Natural killer cell (primary cell): ENCODE measurements at regions of chr2 and their contacts with region 1.

Region 1: DNA sequence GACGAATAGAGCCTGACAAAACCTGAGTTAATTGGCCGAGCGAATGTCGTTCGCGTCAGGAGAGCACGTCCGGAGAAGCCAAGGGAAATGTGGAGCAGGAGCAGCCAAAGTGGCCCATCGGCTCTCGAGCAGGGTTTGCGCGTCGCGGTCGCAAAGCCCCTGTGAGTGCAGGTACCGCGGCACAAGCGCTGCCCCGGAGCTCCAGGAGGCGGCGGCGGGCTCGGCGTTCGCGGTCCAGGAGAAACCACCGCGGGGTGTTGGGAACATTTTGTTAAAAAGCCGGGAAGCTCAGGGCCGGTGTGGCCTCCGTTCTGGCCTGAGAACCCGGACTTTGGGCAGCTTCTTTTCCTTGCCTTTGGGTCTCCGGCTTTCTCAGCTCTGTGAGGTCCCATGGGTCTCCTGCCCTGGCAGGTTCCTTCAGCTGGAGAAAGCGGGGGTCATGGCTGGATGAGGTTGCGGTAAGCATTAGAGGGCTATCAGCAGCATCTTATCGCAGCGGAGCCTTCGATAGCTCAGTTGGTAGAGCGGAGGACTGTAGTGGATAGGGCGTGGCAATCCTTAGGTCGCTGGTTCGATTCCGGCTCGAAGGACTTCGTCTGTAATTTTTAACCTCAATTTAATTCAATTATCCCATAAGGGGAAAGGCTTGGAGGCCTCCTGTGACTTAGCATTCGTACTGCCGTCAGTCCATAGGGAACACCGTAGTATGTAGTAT is 1.0 kb upstream of the AGBL5 start:
- DNase-seq: peak; percentile 94 to 98
- ATAC-seq: peak; percentile 59 to 80 (median 60)
- H3K4me3 ChIP-seq: peak overlapping the region; percentile 66
- H3K4me3 Mint-ChIP-seq: peak overlapping the region; percentile 99
- H3K27ac ChIP-seq: peak overlapping the region; percentile 82
- H3K27ac Mint-ChIP-seq: peak overlapping the region; percentile 99 to 100
- H3K4me1 ChIP-seq: peaks cover 16% of the 10 kb centered on the region
- H3K4me1 Mint-ChIP-seq: peaks cover 29 to 37% of the 10 kb centered on the region in 2 donors
- H3K27me3 ChIP-seq: no peaks in the 10 kb centered on the region
- H3K27me3 Mint-ChIP-seq: peaks cover 6 to 12% of the 10 kb centered on the region in 2 donors
- CTCF ChIP-seq: no peak

Region 2: GRCh38 chr2:26942543-26943295 is 107.7 kb before region 1 on chr2:
- intact Hi-C with region 1: no loop called
- DNase-seq: peak; percentile 46 to 77
- ATAC-seq: peak in 2 of 3 donors; percentile 36 to 64
- H3K4me3 ChIP-seq: no peak overlapping the region
- H3K4me3 Mint-ChIP-seq: no peak overlapping the region
- H3K27ac ChIP-seq: no peak overlapping the region
- H3K27ac Mint-ChIP-seq: no peak overlapping the region
- H3K4me1 ChIP-seq: no peaks in the 10 kb centered on the region
- H3K4me1 Mint-ChIP-seq: peaks cover 0 to 7% of the 10 kb centered on the region in 2 donors
- H3K27me3 ChIP-seq: no peaks in the 10 kb centered on the region
- H3K27me3 Mint-ChIP-seq: peaks cover 10 to 14% of the 10 kb centered on the region in 2 donors
- CTCF ChIP-seq: peak; percentile 73

Region 3: DNA sequence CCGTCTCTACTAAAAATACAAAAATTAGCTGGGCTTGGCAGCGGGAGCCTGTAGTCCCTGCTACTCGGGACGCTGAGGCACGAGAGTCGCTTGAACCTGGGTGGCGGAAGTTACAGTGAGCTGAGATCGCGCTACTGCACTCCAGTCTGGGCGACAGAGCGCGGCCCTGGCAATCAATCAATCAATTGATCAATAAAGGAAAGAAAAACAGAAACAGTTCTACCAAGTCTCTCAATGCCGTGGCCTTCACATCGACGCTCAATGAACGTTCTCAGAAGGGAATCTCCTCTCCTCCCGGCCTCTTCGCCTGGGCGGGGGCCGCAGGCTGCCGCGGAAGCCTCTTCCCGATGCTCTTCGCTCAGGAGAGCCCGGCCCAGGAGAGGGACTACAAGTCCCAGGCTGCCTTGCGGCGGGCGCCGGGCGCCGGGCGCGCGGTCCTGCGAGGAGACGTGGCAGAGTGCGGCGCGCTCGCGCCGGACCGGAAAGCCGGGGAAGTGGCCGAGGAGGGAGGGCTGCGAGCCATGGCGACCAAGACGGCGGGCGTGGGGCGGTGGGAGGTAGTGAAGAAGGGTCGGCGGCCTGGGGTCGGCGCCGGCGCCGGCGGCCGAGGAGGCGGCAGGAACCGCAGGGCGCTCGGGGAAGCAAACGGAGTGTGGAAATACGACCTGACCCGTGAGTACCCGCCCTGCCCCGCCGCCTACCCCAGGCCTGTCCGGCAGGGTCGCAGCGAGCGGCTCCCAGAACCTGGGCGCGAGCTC is 17.8 kb before region 1 on chr2 and contains the start of gene TMEM214:
- intact Hi-C with region 1: loop called (anchors 2 kb)
- DNase-seq: peak; percentile 77 to 83
- ATAC-seq: peak; percentile 95 to 98 (median 96)
- H3K4me3 ChIP-seq: peak within 1 kb of the TSS; percentile 90
- H3K4me3 Mint-ChIP-seq: peak within 1 kb of the TSS; percentile 94
- H3K27ac ChIP-seq: peak within 1 kb of the TSS; percentile 79
- H3K27ac Mint-ChIP-seq: peak within 1 kb of the TSS; percentile 86 to 95
- H3K4me1 ChIP-seq: peaks cover 18% of the 10 kb centered on the region
- H3K4me1 Mint-ChIP-seq: peaks cover 13 to 54% of the 10 kb centered on the region in 2 donors
- H3K27me3 ChIP-seq: no peaks in the 10 kb centered on the region
- H3K27me3 Mint-ChIP-seq: no peaks in the 10 kb centered on the region
- CTCF ChIP-seq: no peak
- total RNA-seq, gene TMEM214: 64.9 to 81.1 (median 79.2) TPM

Region 4: DNA sequence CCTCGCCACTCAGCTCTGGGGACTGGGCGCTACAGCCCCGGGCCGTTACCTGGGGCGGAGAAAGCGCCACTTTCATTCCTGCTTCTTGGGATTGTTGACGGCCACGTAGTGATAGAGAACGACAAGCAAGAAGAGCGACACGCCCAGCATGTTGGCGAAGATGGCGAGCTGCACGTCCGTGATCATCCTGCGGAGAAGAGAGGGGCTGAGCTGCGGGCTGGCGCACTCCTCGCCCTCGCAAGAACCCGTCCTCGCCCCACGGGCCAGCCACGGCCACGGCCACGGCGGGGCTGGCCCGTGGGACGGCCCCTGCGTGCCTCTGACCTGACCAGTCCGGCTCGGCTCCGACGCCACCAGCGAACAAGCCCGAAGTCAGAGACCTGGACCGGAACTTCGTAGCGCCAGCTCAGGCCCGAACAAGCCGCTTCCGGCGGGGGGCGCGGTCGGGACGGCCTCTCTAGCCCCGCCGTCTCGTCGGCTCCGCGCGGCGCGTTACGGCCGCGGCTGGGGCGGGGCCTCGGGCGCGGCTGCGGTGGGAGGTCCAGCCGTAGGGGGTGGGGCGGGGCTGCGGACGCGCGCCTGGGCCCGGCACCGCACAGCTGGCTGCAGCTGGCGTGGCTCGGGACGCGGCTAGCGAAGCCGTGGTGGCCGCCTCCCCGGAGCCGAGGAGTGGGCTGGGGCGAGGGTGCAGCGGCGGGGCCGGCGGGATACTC is 21.0 kb after region 1 on chr2 and contains the start of gene OST4:
- intact Hi-C with region 1: loop called (anchors 1 kb)
- DNase-seq: peak; percentile 88 to 94
- ATAC-seq: peak; percentile 90 to 97 (median 92)
- H3K4me3 ChIP-seq: peak within 1 kb of the TSS; percentile 92
- H3K4me3 Mint-ChIP-seq: peak within 1 kb of the TSS; percentile 97
- H3K27ac ChIP-seq: peak within 1 kb of the TSS; percentile 87
- H3K27ac Mint-ChIP-seq: peak within 1 kb of the TSS; percentile 90 to 93
- H3K4me1 ChIP-seq: peaks cover 49% of the 10 kb centered on the region
- H3K4me1 Mint-ChIP-seq: peaks cover 49 to 70% of the 10 kb centered on the region in 2 donors
- H3K27me3 ChIP-seq: no peaks in the 10 kb centered on the region
- H3K27me3 Mint-ChIP-seq: no peaks in the 10 kb centered on the region
- CTCF ChIP-seq: no peak
- total RNA-seq, gene OST4: 178 to 207 (median 192) TPM

Region 5: DNA sequence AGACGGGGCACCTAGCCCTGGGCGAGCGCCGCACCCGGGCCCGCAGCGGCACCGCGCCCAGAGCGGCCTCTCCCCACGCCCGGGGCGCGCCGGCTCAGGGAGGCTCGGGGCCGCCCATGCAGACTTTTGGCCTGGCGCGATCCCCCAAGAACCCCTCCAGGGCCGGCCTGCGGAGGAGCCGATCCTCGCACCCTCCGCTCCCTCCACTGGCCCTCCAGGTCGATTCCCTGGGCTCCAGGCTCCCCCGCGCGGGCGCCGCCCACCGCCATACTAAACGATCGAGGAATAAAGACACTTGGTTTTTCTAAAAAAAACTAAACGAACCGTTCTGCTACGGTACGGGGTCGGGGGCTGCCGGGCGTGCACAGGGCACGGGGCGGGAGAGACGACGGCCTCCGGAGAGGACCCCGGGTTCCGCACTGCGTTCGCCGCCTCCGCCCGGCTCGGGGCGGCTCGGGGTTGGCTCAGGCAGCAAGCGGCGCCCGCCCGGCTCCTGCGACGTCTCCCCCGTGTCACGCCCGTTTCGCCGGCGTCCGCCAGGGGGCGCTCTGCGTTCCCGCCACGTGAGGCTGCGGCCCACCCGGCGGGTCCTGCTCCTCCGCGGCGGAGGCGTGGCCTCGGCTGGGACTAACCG is 35.8 kb after region 1 on chr2:
- intact Hi-C with region 1: loop called (anchors 1 kb)
- DNase-seq: peak; percentile 99
- ATAC-seq: peak; percentile 93 to 98 (median 96)
- H3K4me3 ChIP-seq: peak overlapping the region; percentile 65
- H3K4me3 Mint-ChIP-seq: peak overlapping the region; percentile 89
- H3K27ac ChIP-seq: peak overlapping the region; percentile 82
- H3K27ac Mint-ChIP-seq: peak overlapping the region; percentile 60 to 87
- H3K4me1 ChIP-seq: peaks cover 34% of the 10 kb centered on the region
- H3K4me1 Mint-ChIP-seq: peaks cover 23 to 29% of the 10 kb centered on the region in 2 donors
- H3K27me3 ChIP-seq: no peaks in the 10 kb centered on the region
- H3K27me3 Mint-ChIP-seq: no peaks in the 10 kb centered on the region
- CTCF ChIP-seq: peak; percentile 86

Region 6: GRCh38 chr2:27133905-27134780 is 83.7 kb after region 1 on chr2 and contains the start of gene PREB:
- intact Hi-C with region 1: loop called (anchors 5 kb)
- DNase-seq: peak; percentile 98 to 99
- ATAC-seq: peak; percentile 96 to 98 (median 97)
- H3K4me3 ChIP-seq: peak within 1 kb of the TSS; percentile 70
- H3K4me3 Mint-ChIP-seq: peak within 1 kb of the TSS; percentile 97
- H3K27ac ChIP-seq: peak within 1 kb of the TSS; percentile 71
- H3K27ac Mint-ChIP-seq: peak within 1 kb of the TSS; percentile 94 to 97
- H3K4me1 ChIP-seq: peaks cover 24% of the 10 kb centered on the region
- H3K4me1 Mint-ChIP-seq: peaks cover 18 to 30% of the 10 kb centered on the region in 2 donors
- H3K27me3 ChIP-seq: no peaks in the 10 kb centered on the region
- H3K27me3 Mint-ChIP-seq: no peaks in the 10 kb centered on the region
- CTCF ChIP-seq: no peak
- total RNA-seq, gene PREB: 24.6 to 41.5 (median 31.2) TPM

Region 7: GRCh38 chr2:27262379-27263286 is 212.2 kb after region 1 on chr2 and contains the start of gene SLC30A3:
- intact Hi-C with region 1: no loop called
- DNase-seq: peak; percentile 30 to 81
- ATAC-seq: peak; percentile 60 to 77 (median 69)
- H3K4me3 ChIP-seq: no peak within 1 kb of the TSS
- H3K4me3 Mint-ChIP-seq: peak within 1 kb of the TSS; percentile 91
- H3K27ac ChIP-seq: no peak within 1 kb of the TSS
- H3K27ac Mint-ChIP-seq: peak within 1 kb of the TSS in 1 of 2 donors; percentile 37
- H3K4me1 ChIP-seq: peaks cover 29% of the 10 kb centered on the region
- H3K4me1 Mint-ChIP-seq: peaks cover 22 to 27% of the 10 kb centered on the region in 2 donors
- H3K27me3 ChIP-seq: peaks cover 35% of the 10 kb centered on the region
- H3K27me3 Mint-ChIP-seq: peaks cover 46 to 50% of the 10 kb centered on the region in 2 donors
- CTCF ChIP-seq: no peak
- total RNA-seq, gene SLC30A3: not detected